CD14-positive monocyte (primary cell): ENCODE measurements at regions of chr16 and their contacts with region 1.

Region 1: GRCh38 chr16:4330277-4330874 is 14.5 kb downstream of the GLIS2 start:
- DNase-seq: peak; percentile 64 to 75 (median 74)
- H3K4me3 ChIP-seq: no peak overlapping the region
- H3K4me3 Mint-ChIP-seq: no peak overlapping the region
- H3K27ac ChIP-seq: no peak overlapping the region
- H3K27ac Mint-ChIP-seq: no peak overlapping the region
- H3K4me1 ChIP-seq: peaks cover 17 to 21% of the 10 kb centered on the region in 2 donors
- H3K4me1 Mint-ChIP-seq: peaks cover 11% of the 10 kb centered on the region
- H3K27me3 ChIP-seq: peaks cover 0 to 15% of the 10 kb centered on the region in 2 donors
- H3K27me3 Mint-ChIP-seq: peaks cover 13 to 37% (median 36%) of the 10 kb centered on the region in 3 donors
- CTCF ChIP-seq: peak; percentile 97

Region 2: DNA sequence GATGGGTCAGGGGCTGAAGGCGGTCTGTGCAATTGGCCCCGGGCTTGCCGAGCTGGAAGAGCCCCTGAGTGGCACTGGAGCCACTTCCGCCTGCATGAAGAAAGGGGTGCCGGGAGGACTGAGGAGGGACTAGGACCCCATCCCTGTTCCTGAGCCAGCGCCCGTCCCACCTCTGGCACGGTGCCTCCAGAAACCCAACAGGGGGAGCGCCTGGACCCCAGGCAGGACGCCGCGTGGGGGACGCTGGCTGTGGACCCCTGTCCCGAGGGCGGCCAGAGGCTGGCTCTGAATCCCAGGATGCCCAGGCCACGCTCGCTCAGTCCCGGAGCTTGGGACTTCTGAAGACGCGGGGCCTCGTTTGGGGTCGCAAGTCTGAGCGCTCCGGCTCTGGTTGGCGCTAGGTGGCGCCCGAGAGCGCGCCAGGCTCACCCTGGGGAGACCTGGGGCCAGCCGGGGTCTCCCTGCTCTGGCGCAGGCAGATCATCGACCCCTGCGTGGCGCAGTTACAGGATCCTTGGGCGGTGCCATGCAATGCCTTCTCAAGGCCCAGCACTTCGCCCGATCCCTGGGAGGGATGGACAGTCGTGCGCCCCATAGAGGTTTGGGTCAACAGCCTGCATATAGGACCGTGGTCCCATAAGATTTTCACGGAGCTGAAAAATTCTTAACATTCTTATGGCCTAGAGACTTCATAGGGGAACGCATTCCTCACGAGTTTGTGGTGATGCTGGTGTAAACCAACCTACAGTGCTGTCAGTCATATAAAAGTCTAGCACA is 391.3 kb before region 1 on chr16:
- intact Hi-C with region 1: loop called in 1 of 2 experiments (anchors 5 kb)
- DNase-seq: peak; percentile 33 to 61 (median 51)
- H3K4me3 ChIP-seq: peak overlapping the region in 2 of 3 experiments; percentile 35 to 53
- H3K4me3 Mint-ChIP-seq: peak overlapping the region; percentile 63 to 74
- H3K27ac ChIP-seq: no peak overlapping the region
- H3K27ac Mint-ChIP-seq: no peak overlapping the region
- H3K4me1 ChIP-seq: peaks cover 8 to 11% of the 10 kb centered on the region in 2 donors
- H3K4me1 Mint-ChIP-seq: peaks cover 6% of the 10 kb centered on the region
- H3K27me3 ChIP-seq: peaks cover 0 to 7% of the 10 kb centered on the region in 2 donors
- H3K27me3 Mint-ChIP-seq: peaks cover 11 to 22% (median 12%) of the 10 kb centered on the region in 3 donors
- CTCF ChIP-seq: peak; percentile 100

Region 3: DNA sequence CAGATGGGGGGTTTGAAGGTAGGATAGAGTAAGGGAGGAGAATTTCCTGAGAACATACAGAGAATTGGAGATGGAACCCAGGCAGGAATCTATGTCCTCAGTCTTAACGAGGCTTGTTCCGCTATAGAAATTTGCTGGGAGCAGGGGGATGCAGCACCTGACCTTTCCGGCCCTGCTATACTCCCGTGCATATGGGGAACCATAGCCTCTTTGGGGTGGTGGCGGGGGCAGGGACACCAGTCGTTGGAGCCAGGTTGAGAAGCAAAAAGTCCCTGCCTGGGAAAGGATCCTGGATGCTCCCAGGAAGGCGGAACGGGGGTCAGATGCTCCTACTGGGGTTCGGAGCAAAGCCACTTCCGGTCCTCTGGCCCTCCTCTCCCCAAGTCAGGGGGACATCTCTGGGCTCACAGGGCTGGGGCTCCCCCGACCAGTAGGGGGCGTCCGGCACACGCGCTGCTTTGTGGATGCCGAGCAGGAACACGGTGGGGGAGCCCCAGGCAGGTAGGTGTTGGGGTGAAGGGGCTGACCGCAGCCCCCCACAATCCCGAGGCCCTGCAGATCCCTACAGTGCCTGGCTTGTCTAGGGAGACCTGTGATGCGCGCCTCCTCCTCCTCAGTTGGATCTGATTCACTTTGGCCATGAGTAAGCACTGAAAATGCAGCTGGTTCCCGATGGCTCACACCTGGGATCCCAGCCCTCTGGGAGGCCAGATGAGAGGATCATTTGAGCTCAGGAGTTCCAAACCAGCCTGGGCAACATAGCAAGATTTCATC is 42.0 kb before region 1 on chr16:
- intact Hi-C with region 1: loop called (anchors 1 to 5 kb)
- DNase-seq: peak; percentile 53 to 74 (median 64)
- H3K4me3 ChIP-seq: no peak overlapping the region
- H3K4me3 Mint-ChIP-seq: peak overlapping the region in 1 of 2 donors; percentile 21
- H3K27ac ChIP-seq: no peak overlapping the region
- H3K27ac Mint-ChIP-seq: no peak overlapping the region
- H3K4me1 ChIP-seq: peaks cover 11 to 15% of the 10 kb centered on the region in 2 donors
- H3K4me1 Mint-ChIP-seq: peaks cover 16% of the 10 kb centered on the region
- H3K27me3 ChIP-seq: peaks cover 0 to 2% of the 10 kb centered on the region in 2 donors
- H3K27me3 Mint-ChIP-seq: peaks cover 14 to 32% (median 32%) of the 10 kb centered on the region in 3 donors
- CTCF ChIP-seq: peak; percentile 96